ENCODE measurements at regions of chr22 and their contacts with region 1.

Region 1: GRCh38 chr22:38506118-38506962 is at the start of gene DDX17:
- DNase-seq: peak; percentile 91 to 99 (median 95)
- ATAC-seq: peak; percentile 89
- H3K4me3 ChIP-seq: peak within 1 kb of the TSS; percentile 83 to 91
- H3K4me3 Mint-ChIP-seq: peak within 1 kb of the TSS; percentile 98
- H3K27ac ChIP-seq: peak within 1 kb of the TSS; percentile 97 to 99
- H3K27ac Mint-ChIP-seq: peak within 1 kb of the TSS; percentile 100
- H3K4me1 ChIP-seq: peaks cover 38% of the 10 kb centered on the region
- H3K4me1 Mint-ChIP-seq: peaks cover 46% of the 10 kb centered on the region
- H3K27me3 ChIP-seq: no peaks in the 10 kb centered on the region
- H3K27me3 Mint-ChIP-seq: no peaks in the 10 kb centered on the region
- CTCF ChIP-seq: no peak
- total RNA-seq, gene DDX17: 348 to 386 TPM

Region 2: DNA sequence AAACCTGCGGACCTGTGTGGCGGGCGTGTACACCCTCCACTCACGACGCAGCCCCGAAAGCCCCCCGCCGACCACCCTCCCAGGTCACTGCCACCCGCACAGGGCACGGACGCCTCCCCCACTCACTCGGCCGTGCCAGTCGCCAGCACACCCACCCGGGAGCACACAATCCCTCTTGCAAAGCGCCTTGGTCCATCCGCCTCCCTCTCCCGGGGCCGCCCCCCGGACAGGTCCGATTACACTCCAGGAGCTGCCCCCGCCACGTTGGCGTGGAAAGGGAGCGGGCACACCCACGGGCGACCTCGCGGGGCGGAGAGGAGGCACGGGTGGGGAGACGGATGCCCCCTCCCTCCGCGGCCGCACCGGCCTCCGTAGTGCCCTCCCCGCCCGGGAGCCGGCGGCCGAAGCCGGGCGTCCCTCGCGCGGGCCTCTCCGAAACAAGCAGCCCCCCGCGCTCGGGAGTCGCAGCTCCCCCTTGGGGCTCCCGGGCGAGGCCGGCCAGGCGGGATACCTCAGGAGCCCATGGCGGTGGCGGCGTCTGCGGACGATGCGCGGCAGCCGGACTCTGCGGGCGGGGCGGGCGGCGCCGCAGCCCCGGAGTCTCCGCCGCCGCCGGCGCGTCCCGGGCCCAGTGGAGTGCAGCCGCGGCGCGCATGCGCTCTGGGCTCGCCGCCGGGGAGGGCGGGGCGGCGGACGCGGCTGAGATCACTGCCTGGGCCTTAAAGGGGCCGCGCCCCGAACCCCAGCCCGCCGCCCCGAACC is 233.8 kb before region 1 on chr22 and contains the start of gene TMEM184B:
- CTCF ChIA-PET with region 1: no interaction called
- POLR2A ChIA-PET with region 1: no interaction called
- intact Hi-C with region 1: loop called in 1 of 2 experiments (anchors 10 kb)
- DNase-seq: peak; percentile 62 to 93 (median 78)
- ATAC-seq: peak; percentile 94
- H3K4me3 ChIP-seq: peak within 1 kb of the TSS; percentile 70 to 77
- H3K4me3 Mint-ChIP-seq: peak within 1 kb of the TSS; percentile 92
- H3K27ac ChIP-seq: peak within 1 kb of the TSS; percentile 59 to 93
- H3K27ac Mint-ChIP-seq: peak within 1 kb of the TSS; percentile 95
- H3K4me1 ChIP-seq: peaks cover 31% of the 10 kb centered on the region
- H3K4me1 Mint-ChIP-seq: peaks cover 50% of the 10 kb centered on the region
- H3K27me3 ChIP-seq: no peaks in the 10 kb centered on the region
- H3K27me3 Mint-ChIP-seq: peaks cover 3% of the 10 kb centered on the region
- CTCF ChIP-seq: no peak
- total RNA-seq, gene TMEM184B: 53.0 TPM

Region 3: GRCh38 chr22:38398609-38399461 is 107.5 kb before region 1 on chr22:
- CTCF ChIA-PET with region 1: no interaction called
- POLR2A ChIA-PET with region 1: no interaction called
- intact Hi-C with region 1: loop called (anchors 5 to 10 kb)
- DNase-seq: peak; percentile 67 to 91 (median 82)
- ATAC-seq: peak; percentile 79
- H3K4me3 ChIP-seq: peak overlapping the region; percentile 55 to 60
- H3K4me3 Mint-ChIP-seq: peak overlapping the region; percentile 81
- H3K27ac ChIP-seq: peak overlapping the region in 1 of 2 experiments; percentile 30
- H3K27ac Mint-ChIP-seq: no peak overlapping the region
- H3K4me1 ChIP-seq: no peaks in the 10 kb centered on the region
- H3K4me1 Mint-ChIP-seq: peaks cover 18% of the 10 kb centered on the region
- H3K27me3 ChIP-seq: no peaks in the 10 kb centered on the region
- H3K27me3 Mint-ChIP-seq: no peaks in the 10 kb centered on the region
- CTCF ChIP-seq: no peak

Region 4: DNA sequence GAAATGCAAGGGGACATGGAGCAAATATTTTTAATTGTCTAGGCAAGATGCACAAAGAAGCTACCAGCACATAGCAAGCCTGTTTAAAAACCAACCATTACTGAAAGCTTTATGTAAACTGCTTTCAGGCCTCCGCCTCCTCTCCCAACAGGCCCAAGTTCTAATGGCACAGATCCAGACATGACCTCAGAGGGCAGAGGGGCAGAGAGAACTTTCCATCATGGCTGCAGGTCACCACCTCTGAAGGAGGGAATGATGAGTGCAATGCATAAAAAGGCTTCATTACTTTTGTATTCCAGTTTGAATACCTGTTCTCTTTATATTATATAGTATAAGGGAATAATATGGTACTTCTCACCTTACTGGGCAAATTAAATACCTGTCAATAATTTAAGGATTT is 15.4 kb before region 1 on chr22:
- CTCF ChIA-PET with region 1: interaction called, 5 read pairs
- POLR2A ChIA-PET with region 1: interaction called, 19 read pairs
- intact Hi-C with region 1: loop called in 1 of 2 experiments (anchors 2 kb)
- DNase-seq: no peak
- ATAC-seq: no peak
- H3K4me3 ChIP-seq: no peak overlapping the region
- H3K4me3 Mint-ChIP-seq: no peak overlapping the region
- H3K27ac ChIP-seq: no peak overlapping the region
- H3K27ac Mint-ChIP-seq: peak overlapping the region; percentile 52
- H3K4me1 ChIP-seq: peaks cover 31% of the 10 kb centered on the region
- H3K4me1 Mint-ChIP-seq: peaks cover 65% of the 10 kb centered on the region
- H3K27me3 ChIP-seq: no peaks in the 10 kb centered on the region
- H3K27me3 Mint-ChIP-seq: no peaks in the 10 kb centered on the region
- CTCF ChIP-seq: no peak

Region 5: GRCh38 chr22:38531251-38531938 is 25.1 kb after region 1 on chr22:
- CTCF ChIA-PET with region 1: no interaction called
- POLR2A ChIA-PET with region 1: interaction called, 5 read pairs
- intact Hi-C with region 1: loop called (anchors 1 kb)
- DNase-seq: no peak
- ATAC-seq: peak; percentile 56
- H3K4me3 ChIP-seq: no peak overlapping the region
- H3K4me3 Mint-ChIP-seq: peak overlapping the region; percentile 23
- H3K27ac ChIP-seq: peak overlapping the region; percentile 7 to 44
- H3K27ac Mint-ChIP-seq: peak overlapping the region; percentile 83
- H3K4me1 ChIP-seq: peaks cover 19% of the 10 kb centered on the region
- H3K4me1 Mint-ChIP-seq: peaks cover 14% of the 10 kb centered on the region
- H3K27me3 ChIP-seq: no peaks in the 10 kb centered on the region
- H3K27me3 Mint-ChIP-seq: no peaks in the 10 kb centered on the region
- CTCF ChIP-seq: no peak

Region 6: GRCh38 chr22:38656256-38657044 is 150.1 kb after region 1 on chr22 and contains the starts of genes CBY1 and FAM227A:
- CTCF ChIA-PET with region 1: no interaction called
- POLR2A ChIA-PET with region 1: no interaction called
- intact Hi-C with region 1: loop called (anchors 1 kb)
- DNase-seq: peak; percentile 76 to 94 (median 87)
- ATAC-seq: peak; percentile 84
- H3K4me3 ChIP-seq: peak within 1 kb of the TSS; percentile 75 to 94
- H3K4me3 Mint-ChIP-seq: peak within 1 kb of the TSS; percentile 96
- H3K27ac ChIP-seq: peak within 1 kb of the TSS; percentile 94 to 96
- H3K27ac Mint-ChIP-seq: peak within 1 kb of the TSS; percentile 99
- H3K4me1 ChIP-seq: peaks cover 11% of the 10 kb centered on the region
- H3K4me1 Mint-ChIP-seq: peaks cover 30% of the 10 kb centered on the region
- H3K27me3 ChIP-seq: no peaks in the 10 kb centered on the region
- H3K27me3 Mint-ChIP-seq: no peaks in the 10 kb centered on the region
- CTCF ChIP-seq: no peak
- total RNA-seq, gene CBY1: 7.6 to 8.9 TPM
- total RNA-seq, gene FAM227A: 0.73 TPM in 1 of 2 experiments, not detected in the other

Region 7: GRCh38 chr22:38707346-38707745 is 201.0 kb after region 1 on chr22:
- CTCF ChIA-PET with region 1: no interaction called
- POLR2A ChIA-PET with region 1: no interaction called
- intact Hi-C with region 1: no loop called
- DNase-seq: peak in 1 of 9 experiments; percentile 42
- ATAC-seq: no peak
- H3K4me3 ChIP-seq: peak overlapping the region; percentile 63 to 84
- H3K4me3 Mint-ChIP-seq: peak overlapping the region; percentile 93
- H3K27ac ChIP-seq: peak overlapping the region in 1 of 2 experiments; percentile 50
- H3K27ac Mint-ChIP-seq: peak overlapping the region; percentile 65
- H3K4me1 ChIP-seq: peaks cover 41% of the 10 kb centered on the region
- H3K4me1 Mint-ChIP-seq: peaks cover 68% of the 10 kb centered on the region
- H3K27me3 ChIP-seq: no peaks in the 10 kb centered on the region
- H3K27me3 Mint-ChIP-seq: no peaks in the 10 kb centered on the region
- CTCF ChIP-seq: no peak

Region 8: DNA sequence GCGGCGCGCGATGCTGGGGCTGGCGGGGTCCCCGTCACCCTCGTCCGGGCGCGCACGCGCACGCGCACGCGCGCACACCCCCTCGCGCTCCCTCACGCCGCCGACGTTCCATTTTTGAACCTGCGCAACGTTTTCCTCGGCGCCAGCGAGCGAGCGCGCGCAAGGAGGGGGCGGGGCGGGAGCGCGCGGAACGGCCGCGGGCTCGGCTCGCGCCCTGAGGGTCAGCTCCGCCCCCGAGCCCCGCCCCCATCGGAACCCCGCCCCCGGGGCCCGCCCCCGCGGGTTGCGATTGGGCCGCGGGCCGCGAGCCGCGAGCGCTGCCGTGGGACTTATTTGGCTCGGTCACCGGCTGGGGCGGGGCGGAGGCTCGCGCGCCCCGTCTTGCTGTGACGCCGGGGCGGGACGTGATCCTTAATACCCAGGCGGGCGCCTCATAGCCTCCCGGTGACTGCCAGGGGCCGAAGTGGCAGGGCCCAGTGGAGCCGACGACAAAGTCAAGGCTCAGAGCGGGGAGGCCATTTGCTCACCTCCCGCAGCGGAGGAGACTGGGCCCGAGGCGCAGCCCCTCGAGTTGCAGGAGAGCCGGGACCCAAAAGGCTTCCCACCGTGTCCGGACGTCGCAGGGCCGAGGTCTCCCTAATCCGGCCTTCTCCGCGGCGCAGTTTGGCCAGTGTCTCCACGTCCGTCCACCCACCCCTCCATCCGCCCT is 646.3 kb after region 1 on chr22 and contains the start of gene CBX7:
- CTCF ChIA-PET with region 1: no interaction called
- POLR2A ChIA-PET with region 1: no interaction called
- intact Hi-C with region 1: loop called in 1 of 2 experiments (anchors 10 kb)
- DNase-seq: peak; percentile 84 to 99 (median 92)
- ATAC-seq: peak; percentile 82
- H3K4me3 ChIP-seq: peak within 1 kb of the TSS; percentile 83 to 89
- H3K4me3 Mint-ChIP-seq: peak within 1 kb of the TSS; percentile 92
- H3K27ac ChIP-seq: peak within 1 kb of the TSS; percentile 86 to 87
- H3K27ac Mint-ChIP-seq: peak within 1 kb of the TSS; percentile 91
- H3K4me1 ChIP-seq: peaks cover 51% of the 10 kb centered on the region
- H3K4me1 Mint-ChIP-seq: peaks cover 42% of the 10 kb centered on the region
- H3K27me3 ChIP-seq: no peaks in the 10 kb centered on the region
- H3K27me3 Mint-ChIP-seq: no peaks in the 10 kb centered on the region
- CTCF ChIP-seq: no peak
- total RNA-seq, gene CBX7: 34.2 to 37.2 TPM

Measured in CD8-positive, alpha-beta T cell (primary cell).